H1 (cell line): ENCODE measurements at regions of chr21 and their contacts with region 1.

Region 1: DNA sequence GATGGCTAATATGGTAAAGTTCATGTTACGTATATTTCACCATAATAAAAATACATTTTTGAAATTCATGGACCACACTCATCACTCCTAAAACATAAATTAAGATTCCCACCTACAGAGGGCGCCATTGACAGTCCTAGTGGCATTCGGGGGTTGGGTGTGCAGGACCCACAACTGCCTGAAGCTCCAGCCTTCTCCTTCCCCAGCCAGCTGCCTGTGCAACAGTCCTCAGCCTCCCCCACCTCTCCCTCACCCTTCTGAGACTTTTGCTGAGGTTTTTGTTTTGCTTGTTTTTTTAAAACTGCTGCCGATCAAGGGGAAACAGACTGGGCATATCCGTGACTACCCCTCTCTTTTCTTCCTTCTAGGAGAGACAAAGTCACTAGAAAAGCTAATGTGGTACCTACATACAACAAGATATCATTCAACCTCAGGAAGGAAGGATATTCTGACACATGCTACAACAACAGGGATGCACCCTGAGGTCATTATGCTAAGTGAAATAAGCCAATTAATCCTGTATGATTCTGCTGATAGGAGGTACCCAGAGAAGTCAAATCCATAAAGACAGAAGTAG is 9.2 kb upstream of the EVA1C start:
- DNase-seq: peak in 1 of 2 experiments; percentile 63
- H3K4me3 ChIP-seq: no peak overlapping the region
- H3K27ac ChIP-seq: no peak overlapping the region
- H3K4me1 ChIP-seq: no peaks in the 10 kb centered on the region; a peak in 1 of 7 replicates
- H3K27me3 ChIP-seq: no peaks in the 10 kb centered on the region
- CTCF ChIP-seq: peak; percentile 69 to 85 (median 82)
- EP300 ChIP-seq: no peak
- POLR2A ChIP-seq: no peak
- RAD21 ChIP-seq: peak; percentile 85 to 87

Region 2: DNA sequence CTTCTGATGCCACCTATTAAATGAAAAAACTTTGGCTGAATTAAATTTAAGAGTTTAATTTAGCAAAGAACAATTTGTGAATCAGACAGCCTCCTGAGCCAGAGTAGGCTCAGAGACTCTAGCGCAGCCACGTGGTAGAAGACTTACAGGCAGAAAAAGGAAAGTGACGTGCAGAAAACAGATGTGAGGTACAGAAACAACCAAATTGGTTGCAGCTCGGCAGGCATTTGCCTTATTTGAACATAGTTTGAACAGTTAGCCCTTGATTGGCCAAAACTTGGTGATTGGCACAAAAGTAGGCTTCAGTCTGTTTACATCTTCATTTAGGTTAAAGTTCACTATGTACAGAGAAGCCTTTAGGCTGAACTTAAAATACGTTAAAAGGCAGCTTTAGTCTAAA is 159.1 kb after region 1 on chr21:
- CTCF ChIA-PET with region 1: interaction called, 11 read pairs
- POLR2A ChIA-PET with region 1: no interaction called
- DNase-seq: no peak
- H3K4me3 ChIP-seq: peak overlapping the region in 1 of 4 experiments; percentile 41; a peak in 1 of 8 replicates
- H3K27ac ChIP-seq: peak overlapping the region; percentile 53; the same call in 1 of the 2 replicates
- H3K4me1 ChIP-seq: peaks cover 4 to 11% (median 8%) of the 10 kb centered on the region in 4 experiments; a peak in 5 of 7 replicates
- H3K27me3 ChIP-seq: no peaks in the 10 kb centered on the region
- CTCF ChIP-seq: peak; percentile 8 to 66 (median 61)
- EP300 ChIP-seq: no peak
- POLR2A ChIP-seq: no peak
- RAD21 ChIP-seq: peak; percentile 75 to 81

Region 3: DNA sequence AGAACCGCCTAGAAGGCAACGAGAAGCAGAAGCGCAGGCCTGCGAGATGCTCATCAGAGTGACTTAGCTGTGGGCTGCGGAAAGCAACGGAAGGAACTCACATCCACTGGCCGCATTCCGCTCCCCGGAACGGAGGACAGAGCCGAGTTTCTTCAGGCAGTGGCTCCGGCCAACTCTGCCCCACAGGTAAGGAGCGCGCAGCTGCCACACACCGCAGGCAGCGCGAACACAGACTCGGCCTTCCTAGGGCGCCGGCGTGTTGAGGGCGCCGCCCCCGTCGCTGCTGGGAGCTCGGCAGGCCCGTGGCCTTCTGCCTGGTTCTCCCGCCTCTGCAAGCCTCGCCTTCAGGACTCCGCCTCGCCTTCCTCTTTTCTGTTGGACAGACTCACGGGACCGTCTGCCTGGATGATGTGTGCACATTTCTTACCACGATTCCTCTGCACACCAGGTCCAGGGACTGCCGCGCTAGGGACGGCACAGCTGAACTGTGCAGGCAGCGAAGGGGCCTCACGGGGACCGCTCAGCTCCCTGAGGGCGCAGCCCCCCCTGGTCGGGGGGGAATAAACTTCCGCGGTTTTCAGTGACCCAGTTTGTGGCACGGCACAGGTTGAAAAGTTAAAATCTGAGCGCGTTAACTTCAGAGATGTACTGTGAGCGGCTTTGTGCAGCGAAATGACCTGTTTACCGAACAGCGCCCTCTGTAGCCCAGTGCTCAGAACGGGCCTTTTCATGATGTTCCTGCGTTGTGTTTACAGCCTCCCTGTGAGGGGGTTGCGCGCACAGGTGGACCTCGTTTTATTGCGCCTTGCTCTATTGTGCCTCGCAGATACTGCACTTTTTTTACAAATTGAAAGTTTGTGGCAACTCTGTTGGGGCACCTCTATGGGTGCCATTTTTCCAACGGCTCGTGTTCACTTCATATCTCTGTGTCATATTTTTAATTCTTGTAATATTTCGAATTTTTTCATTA is 166.3 kb after region 1 on chr21:
- CTCF ChIA-PET with region 1: interaction called, 112 read pairs
- POLR2A ChIA-PET with region 1: no interaction called
- DNase-seq: peak; percentile 50 to 89
- H3K4me3 ChIP-seq: peak overlapping the region; percentile 39 to 79 (median 74)
- H3K27ac ChIP-seq: no peak overlapping the region
- H3K4me1 ChIP-seq: peaks cover 0 to 7% (median 3%) of the 10 kb centered on the region in 4 experiments; a peak in 4 of 7 replicates
- H3K27me3 ChIP-seq: peaks cover 0 to 2% (median 0%) of the 10 kb centered on the region in 4 experiments; a peak in 1 of 7 replicates
- CTCF ChIP-seq: peak; percentile 77 to 97 (median 82)
- EP300 ChIP-seq: peak in 1 of 2 experiments; percentile 17; a peak in 1 of 3 replicates
- POLR2A ChIP-seq: peak in 1 of 2 experiments; percentile 31; a peak in 2 of 3 replicates
- RAD21 ChIP-seq: peak; percentile 67 to 74

Region 4: DNA sequence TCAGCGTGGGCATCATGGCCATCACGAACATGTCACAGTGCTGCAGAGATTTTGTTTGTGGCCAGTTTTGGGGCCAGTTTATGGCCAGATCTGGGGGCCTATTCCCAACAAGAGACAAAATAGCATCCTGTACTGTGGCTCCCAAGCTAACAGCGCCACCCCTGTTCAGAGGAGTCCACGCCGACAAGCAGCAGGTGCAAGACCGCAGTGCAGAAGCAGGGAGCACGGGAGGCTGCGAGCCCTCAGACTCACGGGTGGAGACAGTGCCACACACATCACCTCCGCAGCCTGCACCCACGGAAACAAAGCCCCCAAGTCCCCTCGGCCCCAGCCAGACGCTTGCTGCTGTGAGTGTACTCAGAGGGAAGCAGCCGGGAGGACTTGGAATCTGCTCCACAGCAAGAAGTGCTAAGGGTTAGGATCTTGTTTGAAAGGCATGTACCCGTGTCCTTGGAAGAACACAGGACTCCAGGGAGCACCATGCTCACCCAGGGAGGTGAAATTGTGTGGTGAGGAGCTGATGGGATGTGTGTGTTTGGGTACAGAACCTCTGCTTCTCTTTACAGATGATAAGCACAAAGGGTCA is 174.9 kb after region 1 on chr21:
- CTCF ChIA-PET with region 1: interaction called, 112 read pairs
- POLR2A ChIA-PET with region 1: no interaction called
- DNase-seq: peak; percentile 23 to 70
- H3K4me3 ChIP-seq: no peak overlapping the region
- H3K27ac ChIP-seq: no peak overlapping the region
- H3K4me1 ChIP-seq: no peaks in the 10 kb centered on the region
- H3K27me3 ChIP-seq: no peaks in the 10 kb centered on the region
- CTCF ChIP-seq: peak; percentile 75 to 94 (median 79)
- EP300 ChIP-seq: no peak
- POLR2A ChIP-seq: no peak
- RAD21 ChIP-seq: peak; percentile 79 to 84

Region 5: DNA sequence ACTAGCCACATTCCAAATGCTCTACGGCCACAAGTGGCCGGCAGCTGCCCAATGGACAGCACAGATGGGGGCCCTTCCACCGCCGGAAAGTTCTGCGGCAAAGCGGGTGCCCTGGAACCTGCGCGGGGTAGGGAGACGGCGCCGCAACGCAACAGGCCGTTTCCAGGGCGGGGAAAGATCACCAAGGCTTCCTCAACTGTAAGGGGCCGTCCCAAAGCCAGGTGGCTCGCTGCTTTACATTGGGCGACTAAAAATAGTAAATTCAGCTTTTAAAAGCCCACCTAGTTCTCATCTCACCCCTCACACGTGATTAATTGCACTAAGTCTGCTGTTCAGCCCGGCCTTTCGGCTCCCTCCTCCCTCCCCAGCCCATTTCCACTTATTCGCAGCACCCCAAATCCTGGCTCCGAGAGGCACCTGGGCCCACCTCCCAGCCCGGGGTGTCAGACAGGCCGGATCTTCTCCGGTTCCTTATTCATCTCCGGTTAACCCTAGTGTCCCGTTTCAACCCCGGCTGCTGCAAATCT is 208.2 kb after region 1 on chr21:
- CTCF ChIA-PET with region 1: interaction called, 13 read pairs
- POLR2A ChIA-PET with region 1: no interaction called
- DNase-seq: no peak
- H3K4me3 ChIP-seq: peak overlapping the region; percentile 81 to 99 (median 96)
- H3K27ac ChIP-seq: no peak overlapping the region
- H3K4me1 ChIP-seq: no peaks in the 10 kb centered on the region; a peak in 2 of 7 replicates
- H3K27me3 ChIP-seq: no peaks in the 10 kb centered on the region
- CTCF ChIP-seq: no peak
- EP300 ChIP-seq: no peak
- POLR2A ChIP-seq: no peak
- RAD21 ChIP-seq: no peak

Region 6: GRCh38 chr21:32782698-32783097 is 379.4 kb after region 1 on chr21:
- CTCF ChIA-PET with region 1: no interaction called
- POLR2A ChIA-PET with region 1: no interaction called
- DNase-seq: no peak
- H3K4me3 ChIP-seq: no peak overlapping the region
- H3K27ac ChIP-seq: no peak overlapping the region
- H3K4me1 ChIP-seq: no peaks in the 10 kb centered on the region
- H3K27me3 ChIP-seq: no peaks in the 10 kb centered on the region
- CTCF ChIP-seq: no peak
- EP300 ChIP-seq: no peak
- POLR2A ChIP-seq: no peak
- RAD21 ChIP-seq: no peak